ENCODE measurements at regions of chr3 and their contacts with region 1.

Region 1: GRCh38 chr3:71184252-71184651 is 399.3 kb downstream of the FOXP1 start:
- DNase-seq: no peak
- H3K4me3 Mint-ChIP-seq: no peak overlapping the region
- H3K27ac Mint-ChIP-seq: no peak overlapping the region
- H3K4me1 Mint-ChIP-seq: peaks cover 12% of the 10 kb centered on the region
- H3K27me3 Mint-ChIP-seq: no peaks in the 10 kb centered on the region
- CTCF ChIP-seq: no peak

Region 2: GRCh38 chr3:71006810-71007785 is 177.2 kb before region 1 on chr3:
- CTCF ChIA-PET with region 1: no interaction called
- POLR2A ChIA-PET with region 1: no interaction called
- intact Hi-C with region 1: no loop called
- DNase-seq: peak; percentile 48
- H3K4me3 Mint-ChIP-seq: no peak overlapping the region
- H3K27ac Mint-ChIP-seq: peak overlapping the region; percentile 63
- H3K4me1 Mint-ChIP-seq: peaks cover 15% of the 10 kb centered on the region
- H3K27me3 Mint-ChIP-seq: no peaks in the 10 kb centered on the region
- CTCF ChIP-seq: peak; percentile 61

Region 3: DNA sequence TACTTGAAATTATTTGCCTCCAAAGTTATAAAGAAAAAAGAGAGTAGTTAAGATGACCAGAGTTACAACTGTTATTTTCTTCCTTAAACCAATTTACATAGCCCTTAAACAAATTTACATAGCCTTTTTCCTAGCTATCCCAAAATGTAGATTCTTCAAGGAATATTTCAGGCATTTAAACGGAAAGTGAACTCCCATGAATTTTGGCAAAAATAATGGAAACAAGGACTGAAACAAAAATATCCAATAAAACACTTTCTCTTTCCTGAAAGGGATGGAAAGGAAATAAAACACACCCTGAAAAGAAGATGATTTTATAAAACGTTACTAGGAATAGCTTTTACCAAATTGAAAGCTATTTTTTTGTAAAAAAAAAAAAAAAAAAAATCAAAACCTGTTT is 19.4 kb before region 1 on chr3:
- CTCF ChIA-PET with region 1: no interaction called
- POLR2A ChIA-PET with region 1: no interaction called
- intact Hi-C with region 1: loop called (anchors 1 kb)
- DNase-seq: no peak
- H3K4me3 Mint-ChIP-seq: no peak overlapping the region
- H3K27ac Mint-ChIP-seq: no peak overlapping the region
- H3K4me1 Mint-ChIP-seq: peaks cover 9% of the 10 kb centered on the region
- H3K27me3 Mint-ChIP-seq: no peaks in the 10 kb centered on the region
- CTCF ChIP-seq: no peak

Measured in MCF 10A (cell line).